Mammary epithelial cell (primary cell): ENCODE measurements at regions of chr9 and their contacts with region 1.

Region 1: DNA sequence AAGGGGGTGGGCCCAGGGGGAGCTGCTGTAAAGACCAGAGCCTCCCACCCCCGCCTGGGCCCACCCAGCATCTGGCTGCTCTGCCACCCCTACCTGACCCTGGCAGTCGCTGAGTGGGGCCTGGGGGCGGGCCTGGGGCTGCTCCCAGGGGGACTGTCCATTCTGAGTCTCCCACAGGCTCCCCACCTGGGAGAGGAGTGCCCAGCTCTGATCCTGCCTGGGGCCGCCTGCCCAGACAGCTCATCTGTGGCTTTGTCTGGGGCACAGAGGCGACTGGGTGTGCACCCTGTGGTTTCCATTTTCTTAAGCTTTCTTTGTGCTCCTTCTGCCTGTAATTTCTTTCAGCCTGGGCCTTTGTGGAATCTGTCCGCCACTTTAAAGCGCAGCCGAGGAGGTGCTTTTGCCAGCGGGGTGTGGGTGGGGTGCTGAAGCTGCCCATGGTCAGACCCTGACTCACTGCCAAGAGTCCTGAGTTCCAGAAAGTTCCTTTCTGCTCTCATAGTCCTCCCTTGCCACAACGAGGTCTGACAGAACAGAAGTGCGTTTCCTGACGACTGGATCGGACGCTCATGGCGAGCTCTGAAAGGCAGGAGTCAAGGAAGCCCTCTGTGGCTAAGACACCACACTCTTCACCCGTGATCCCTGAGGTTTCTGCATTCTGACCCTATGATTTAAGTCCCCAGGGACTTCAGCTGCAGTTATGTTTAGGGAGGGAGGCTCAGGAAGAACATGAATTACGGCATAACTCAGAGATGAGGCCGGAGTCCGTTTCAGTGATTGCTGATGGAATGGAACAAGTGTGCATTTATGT is 225.0 kb downstream of the FANCC start:
- DNase-seq: peak; percentile 98
- H3K4me3 ChIP-seq: no peak overlapping the region
- H3K27ac ChIP-seq: peak overlapping the region; percentile 54
- H3K4me1 ChIP-seq: peaks cover 29% of the 10 kb centered on the region
- H3K27me3 ChIP-seq: no peaks in the 10 kb centered on the region
- CTCF ChIP-seq: no peak

Region 2: DNA sequence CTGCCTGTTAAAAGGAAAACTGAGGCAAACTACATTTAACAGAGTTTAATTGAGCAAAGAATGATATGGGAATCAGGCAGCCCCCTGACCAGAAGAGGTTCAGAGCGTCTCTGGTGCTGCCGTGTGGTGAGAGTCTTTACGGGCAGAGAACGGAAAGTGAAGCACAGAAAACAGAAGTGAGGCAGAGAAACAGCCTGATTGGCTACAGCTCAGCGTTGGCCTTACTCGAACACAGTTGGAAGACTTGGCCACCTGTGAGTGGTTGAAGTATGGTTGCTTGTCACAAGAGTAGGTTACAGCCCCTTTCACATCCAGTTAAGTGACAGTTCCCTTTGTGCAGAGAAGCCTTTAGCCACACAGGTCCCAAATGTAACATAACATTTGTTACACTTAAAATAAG is 436.3 kb before region 1 on chr9:
- CTCF ChIA-PET with region 1: no interaction called
- dilution Hi-C with region 1: loop called (anchors 25 kb)
- in situ Hi-C with region 1: no loop called
- intact Hi-C with region 1: no loop called
- DNase-seq: no peak
- H3K4me3 ChIP-seq: peak overlapping the region in 1 of 3 experiments; percentile 10
- H3K27ac ChIP-seq: no peak overlapping the region
- H3K4me1 ChIP-seq: peaks cover 8% of the 10 kb centered on the region
- H3K27me3 ChIP-seq: no peaks in the 10 kb centered on the region
- CTCF ChIP-seq: no peak

Region 3: DNA sequence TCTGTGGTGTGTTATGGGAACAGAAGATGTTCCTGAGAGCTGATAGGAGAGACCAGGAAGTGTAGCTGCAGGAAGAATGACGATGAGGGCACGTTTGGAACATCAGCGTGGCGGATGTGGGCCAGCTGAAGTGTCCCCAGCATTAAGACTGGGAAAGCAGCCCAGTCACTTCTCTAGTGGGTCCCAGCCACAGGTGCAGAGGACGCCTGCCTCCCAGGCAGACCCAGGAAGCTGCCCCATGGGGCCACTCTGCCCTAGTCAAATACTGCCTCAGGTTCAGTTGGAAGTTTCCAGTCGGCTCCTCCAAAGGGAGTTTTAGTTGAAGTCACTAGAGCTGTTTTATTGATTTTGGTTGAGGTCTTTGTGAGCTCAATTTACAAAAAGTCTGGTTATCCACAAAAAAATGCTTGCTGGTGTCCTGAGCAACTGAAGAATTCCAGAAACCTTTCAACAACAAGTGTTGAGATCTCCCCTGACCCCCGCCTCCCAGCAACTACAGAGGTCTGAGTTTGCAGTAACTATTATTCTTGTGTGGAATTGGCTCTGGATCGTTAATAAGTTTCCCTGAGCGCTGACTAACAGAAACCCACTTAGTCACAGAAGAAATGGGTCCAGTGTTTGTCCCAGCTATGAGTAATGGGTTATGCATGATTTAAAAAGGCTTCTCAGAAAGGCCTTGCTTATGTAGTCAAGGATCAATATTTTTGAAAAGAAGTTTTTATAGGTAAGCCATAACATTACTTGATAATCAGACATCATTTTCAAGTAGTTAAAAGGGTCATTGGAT is 69.1 kb before region 1 on chr9:
- CTCF ChIA-PET with region 1: no interaction called
- dilution Hi-C with region 1: loop called (anchors 5 kb)
- in situ Hi-C with region 1: no loop called
- intact Hi-C with region 1: no loop called
- DNase-seq: peak; percentile 89
- H3K4me3 ChIP-seq: no peak overlapping the region
- H3K27ac ChIP-seq: peak overlapping the region; percentile 72
- H3K4me1 ChIP-seq: peaks cover 57% of the 10 kb centered on the region
- H3K27me3 ChIP-seq: no peaks in the 10 kb centered on the region
- CTCF ChIP-seq: no peak

Region 4: GRCh38 chr9:95055851-95056551 is 36.5 kb before region 1 on chr9:
- CTCF ChIA-PET with region 1: no interaction called
- dilution Hi-C with region 1: loop called (anchors 5 kb)
- in situ Hi-C with region 1: no loop called
- intact Hi-C with region 1: loop called (anchors 2 kb)
- DNase-seq: no peak
- H3K4me3 ChIP-seq: peak overlapping the region in 2 of 3 experiments; percentile 40 to 43
- H3K27ac ChIP-seq: peak overlapping the region; percentile 83
- H3K4me1 ChIP-seq: peaks cover 24% of the 10 kb centered on the region
- H3K27me3 ChIP-seq: no peaks in the 10 kb centered on the region
- CTCF ChIP-seq: no peak

Region 5: DNA sequence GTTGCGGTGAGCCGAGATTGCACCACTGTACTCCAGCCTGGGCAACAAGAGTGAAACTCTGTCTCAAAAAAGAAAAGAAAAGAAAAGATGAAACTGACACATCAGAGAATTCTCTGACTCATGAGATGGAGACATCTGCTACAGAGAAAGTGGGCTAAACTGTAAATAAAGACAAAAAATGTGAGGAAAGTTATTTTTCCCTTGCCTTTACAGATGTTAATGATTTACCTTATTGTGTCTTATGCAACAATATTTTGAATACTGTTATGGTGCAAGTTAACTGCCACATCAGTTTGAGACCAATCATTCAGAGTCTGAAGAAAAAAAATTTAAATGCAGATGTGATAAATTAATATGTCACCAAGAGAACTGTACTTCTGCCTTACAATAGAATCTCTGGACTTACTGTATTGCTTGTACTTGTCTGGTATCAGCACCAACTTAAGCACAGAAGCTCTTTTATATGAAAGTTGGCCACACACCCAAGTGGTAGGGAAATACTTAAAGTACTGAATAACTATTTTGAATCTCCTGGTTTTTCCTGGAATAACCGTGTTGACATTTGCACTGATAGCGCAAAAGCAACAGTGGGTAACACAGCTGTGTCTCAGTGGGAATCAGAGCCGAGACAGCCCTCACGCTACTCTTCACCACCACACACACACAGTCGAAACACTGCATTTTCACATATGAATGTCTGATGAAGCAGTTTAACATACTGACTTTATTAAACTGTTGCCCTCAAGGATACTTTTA is 55.2 kb after region 1 on chr9:
- CTCF ChIA-PET with region 1: no interaction called
- dilution Hi-C with region 1: no loop called
- in situ Hi-C with region 1: no loop called
- intact Hi-C with region 1: no loop called
- DNase-seq: no peak
- H3K4me3 ChIP-seq: no peak overlapping the region
- H3K27ac ChIP-seq: no peak overlapping the region
- H3K4me1 ChIP-seq: no peaks in the 10 kb centered on the region
- H3K27me3 ChIP-seq: no peaks in the 10 kb centered on the region
- CTCF ChIP-seq: no peak